ENCODE measurements at regions of chr1 and their contacts with region 1.

Region 1: DNA sequence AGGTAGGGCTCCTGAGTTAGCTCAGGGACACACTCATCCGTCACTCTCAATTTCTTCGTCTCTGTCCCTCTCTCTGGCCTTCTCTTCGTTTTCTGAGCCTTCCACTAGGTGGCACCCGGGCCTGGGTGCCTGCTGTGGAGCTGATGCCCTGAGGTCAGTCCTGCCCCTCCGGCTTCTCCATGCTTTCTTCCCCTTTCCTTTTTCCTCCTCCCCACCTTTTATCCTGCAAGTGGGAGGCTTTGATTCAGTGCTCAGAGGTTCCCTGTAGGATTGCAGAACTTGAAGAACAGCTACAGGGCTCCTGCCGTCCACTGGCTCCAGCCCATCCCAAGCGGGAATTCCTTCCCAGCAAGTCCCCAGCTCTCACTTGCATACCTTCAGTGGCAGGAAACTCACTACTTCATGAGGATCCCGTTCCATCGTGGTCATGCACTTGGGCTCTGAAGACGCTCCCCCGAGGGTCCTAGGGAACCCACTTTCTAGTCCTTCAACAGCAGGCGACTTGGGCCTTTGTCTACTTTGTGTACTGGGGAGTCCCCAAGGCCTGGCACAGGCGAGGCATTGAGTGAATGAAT is 45.6 kb downstream of the SRRM1 start:
- DNase-seq: no peak
- H3K4me3 ChIP-seq: no peak overlapping the region
- H3K27me3 ChIP-seq: no peaks in the 10 kb centered on the region
- CTCF ChIP-seq: peak; percentile 96

Region 2: DNA sequence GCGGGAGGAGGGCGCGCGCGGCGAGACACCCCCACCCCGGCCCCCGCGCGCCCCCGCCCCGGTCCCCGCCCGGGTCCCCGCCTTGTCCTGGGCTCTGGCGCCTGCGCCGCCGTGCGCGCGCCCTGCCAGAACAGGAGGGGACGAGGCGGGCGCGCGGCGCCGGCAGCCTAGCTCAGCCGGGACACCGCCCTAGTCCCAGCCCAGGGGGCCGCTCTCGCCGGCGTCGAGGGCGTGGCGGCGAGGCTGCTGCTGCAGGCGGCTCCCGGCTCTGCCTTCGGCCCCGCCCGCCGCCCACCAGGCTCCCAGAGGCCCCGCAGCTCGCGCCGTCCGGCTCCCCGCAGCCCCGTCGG is 186.0 kb before region 1 on chr1 and contains the start of gene RCAN3:
- CTCF ChIA-PET with region 1: no interaction called
- POLR2A ChIA-PET with region 1: no interaction called
- DNase-seq: no peak
- H3K4me3 ChIP-seq: peak within 1 kb of the TSS; percentile 73
- H3K27me3 ChIP-seq: no peaks in the 10 kb centered on the region
- CTCF ChIP-seq: no peak
- polyA plus RNA-seq, gene RCAN3: 6.3 and 7.6 TPM in 2 replicates

Region 3: DNA sequence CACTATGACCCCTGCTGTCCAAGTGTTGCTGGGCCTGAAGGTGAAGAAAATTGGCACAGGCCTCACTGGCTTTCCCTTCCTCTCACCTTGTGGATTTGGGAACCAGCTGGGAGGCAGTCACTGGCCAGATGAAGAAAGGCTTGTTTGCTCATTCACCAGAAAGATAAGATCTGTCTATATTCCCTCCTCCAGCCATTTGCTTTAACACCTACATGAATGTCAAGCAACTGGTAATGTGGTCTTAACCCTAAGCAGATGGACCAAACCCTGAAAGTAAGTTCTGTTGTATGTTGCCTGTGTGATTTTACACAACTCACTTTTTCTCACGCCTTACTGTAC is 55.9 kb before region 1 on chr1:
- CTCF ChIA-PET with region 1: no interaction called
- POLR2A ChIA-PET with region 1: no interaction called
- DNase-seq: no peak
- H3K4me3 ChIP-seq: no peak overlapping the region
- H3K27me3 ChIP-seq: no peaks in the 10 kb centered on the region
- CTCF ChIP-seq: no peak

Region 4: DNA sequence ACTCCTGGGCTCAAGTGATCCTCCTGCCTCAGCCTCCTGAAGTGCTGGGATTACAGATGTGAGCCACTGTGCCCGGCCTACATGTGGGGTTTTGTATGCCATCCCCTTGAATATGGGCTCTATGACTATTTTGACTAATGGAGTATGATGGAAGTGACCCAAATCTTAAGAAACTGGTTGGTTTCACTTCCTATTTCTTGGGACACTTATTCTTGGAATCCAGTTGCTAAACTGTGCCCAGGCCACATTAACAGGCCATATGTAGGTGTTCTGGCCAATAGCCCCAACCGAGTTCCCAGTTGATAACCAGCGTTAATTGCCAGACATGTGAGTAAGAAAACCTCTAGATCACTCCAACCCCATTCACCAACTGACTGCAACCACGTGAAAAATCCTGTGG is 20.2 kb after region 1 on chr1:
- CTCF ChIA-PET with region 1: interaction called, 12 read pairs
- POLR2A ChIA-PET with region 1: no interaction called
- DNase-seq: no peak
- H3K4me3 ChIP-seq: no peak overlapping the region
- H3K27me3 ChIP-seq: no peaks in the 10 kb centered on the region
- CTCF ChIP-seq: no peak

Region 5: DNA sequence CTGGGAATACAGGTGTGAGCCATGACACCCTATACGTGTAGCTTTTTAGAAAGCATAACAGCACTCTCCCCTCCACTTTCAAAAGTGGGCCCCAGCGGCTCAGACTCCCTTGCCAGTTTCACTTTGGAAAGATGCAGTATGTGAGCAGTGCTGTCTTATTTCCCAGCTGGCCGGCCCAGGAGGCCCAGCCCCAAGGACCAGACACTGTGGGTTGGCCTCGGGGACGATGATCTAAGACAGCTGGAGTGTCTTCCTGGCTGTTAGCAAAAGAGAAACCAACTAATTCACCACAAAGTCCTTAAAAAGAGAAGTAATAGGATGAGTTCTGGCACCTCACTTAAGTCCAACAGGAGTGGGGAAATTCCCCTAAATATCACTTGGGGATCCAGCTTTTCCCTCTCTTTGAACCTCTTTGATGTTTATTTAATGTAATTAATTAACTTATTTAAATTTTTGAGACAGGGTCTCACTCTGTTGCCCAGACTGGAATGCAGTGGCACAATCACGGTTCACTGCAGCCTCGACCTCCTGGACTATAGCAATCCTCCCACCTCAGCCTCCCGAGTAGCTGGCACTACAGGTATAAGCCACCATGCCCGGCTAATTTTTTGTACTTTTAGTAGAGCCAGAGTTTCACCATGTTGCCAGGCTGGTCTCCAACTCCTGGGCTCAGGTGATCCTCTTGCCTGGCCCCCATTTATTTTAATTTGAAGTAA is 39.0 kb after region 1 on chr1:
- CTCF ChIA-PET with region 1: interaction called, 13 read pairs
- POLR2A ChIA-PET with region 1: no interaction called
- DNase-seq: peak; percentile 79
- H3K4me3 ChIP-seq: no peak overlapping the region
- H3K27me3 ChIP-seq: no peaks in the 10 kb centered on the region
- CTCF ChIP-seq: no peak

Region 6: DNA sequence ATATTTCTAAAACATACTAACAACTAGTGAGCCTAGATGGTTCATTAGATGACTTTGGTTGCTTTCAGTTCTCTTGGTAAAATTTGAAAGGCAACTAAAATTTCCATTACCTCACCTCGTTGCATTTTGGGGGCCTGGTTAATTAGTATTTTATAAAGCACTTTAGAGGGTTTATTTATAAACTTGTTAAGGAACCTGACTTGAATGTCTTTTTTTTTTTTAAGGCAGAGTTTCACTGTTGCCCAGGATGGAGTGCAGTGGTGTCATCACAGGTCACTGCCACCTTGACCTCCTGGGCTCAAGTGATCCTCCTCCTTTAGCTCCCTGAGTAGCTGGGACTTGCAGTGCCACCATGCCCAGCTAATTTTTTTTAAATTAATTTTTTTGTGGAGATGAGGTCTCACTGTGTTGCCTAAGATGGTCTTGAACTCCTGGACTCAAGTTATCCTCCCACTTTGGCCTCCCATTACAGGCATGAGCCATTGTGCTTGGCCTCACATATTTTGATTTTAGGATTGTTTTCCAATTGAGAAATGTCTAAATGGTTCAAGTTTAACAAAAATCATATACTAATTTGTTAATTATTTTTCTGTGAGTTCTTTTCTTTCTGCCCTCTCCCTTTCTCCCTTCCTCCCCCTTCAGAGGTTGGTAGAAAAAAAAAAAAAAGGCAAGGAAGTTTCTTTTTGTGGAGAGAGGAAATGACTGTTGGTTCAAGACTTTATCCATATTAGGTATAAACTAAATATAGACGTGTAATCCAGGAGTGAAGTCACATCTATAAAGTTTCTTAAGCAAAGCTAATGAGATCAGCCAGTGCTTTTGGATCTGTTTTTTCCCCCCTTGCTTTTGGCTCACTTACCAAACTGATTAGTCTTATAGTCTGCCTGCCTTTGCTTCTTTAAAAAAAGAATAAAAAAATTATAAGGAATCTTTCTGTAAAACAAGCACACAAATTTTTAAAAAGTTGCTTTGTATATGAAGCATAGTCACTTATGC is 81.2 kb after region 1 on chr1:
- CTCF ChIA-PET with region 1: interaction called, 12 read pairs
- POLR2A ChIA-PET with region 1: no interaction called
- DNase-seq: peak; percentile 92
- H3K4me3 ChIP-seq: no peak overlapping the region
- H3K27me3 ChIP-seq: no peaks in the 10 kb centered on the region
- CTCF ChIP-seq: no peak

Region 7: GRCh38 chr1:24830680-24831272 is 142.1 kb after region 1 on chr1:
- CTCF ChIA-PET with region 1: interaction called, 70 read pairs
- POLR2A ChIA-PET with region 1: no interaction called
- DNase-seq: peak; percentile 20
- H3K4me3 ChIP-seq: no peak overlapping the region
- H3K27me3 ChIP-seq: no peaks in the 10 kb centered on the region
- CTCF ChIP-seq: peak; percentile 69